Mucosa of descending colon (tissue), 3 donors: ENCODE measurements at regions of chr17 and their contacts with region 1.

Region 1: DNA sequence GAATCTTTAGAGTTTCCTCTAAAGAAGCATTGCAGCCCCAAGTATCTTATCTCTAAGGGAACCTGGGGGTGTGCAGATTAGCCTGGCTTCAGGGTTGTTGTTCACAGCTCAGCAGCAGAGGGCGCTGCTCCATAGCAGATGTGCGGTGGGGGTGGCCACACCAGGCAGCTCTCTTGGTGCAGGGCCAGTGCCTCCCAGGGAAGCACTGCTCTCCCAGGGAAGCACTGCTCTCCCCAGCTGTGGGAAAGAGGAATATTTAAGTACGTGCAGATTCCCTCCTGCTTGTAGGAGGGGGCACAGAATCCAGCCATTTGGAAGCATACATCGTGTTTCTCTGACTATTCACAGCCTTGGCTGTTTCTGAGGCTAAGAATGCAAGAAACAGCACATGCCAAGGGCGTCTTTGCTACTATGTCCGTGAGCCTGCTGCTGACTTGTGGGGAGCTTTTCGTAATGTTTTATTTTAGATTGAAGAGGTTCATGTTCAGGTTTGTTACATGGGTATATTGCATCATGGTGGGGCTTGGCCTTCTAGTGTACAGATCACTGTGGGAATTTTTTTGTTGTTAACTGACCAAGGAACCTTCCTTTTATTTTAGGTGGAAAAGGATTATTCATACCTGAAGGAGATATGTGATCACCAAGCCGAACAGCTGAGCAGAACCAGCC is 217.8 kb downstream of the SPECC1 start:
- DNase-seq: peak; percentile 66 to 88 (median 87)
- ATAC-seq: peak; percentile 98
- H3K4me3 ChIP-seq: no peak overlapping the region
- H3K4me1 ChIP-seq: no peaks in the 10 kb centered on the region
- CTCF ChIP-seq: peak; percentile 64

Region 2: GRCh38 chr17:20153231-20153630 is 73.7 kb before region 1 on chr17:
- intact Hi-C with region 1: no loop called
- DNase-seq: peak in 1 of 3 donors; percentile 34
- ATAC-seq: peak; percentile 34
- H3K4me3 ChIP-seq: no peak overlapping the region
- H3K4me1 ChIP-seq: peaks cover 9% of the 10 kb centered on the region
- CTCF ChIP-seq: no peak

Region 3: GRCh38 chr17:20291853-20292252 is 64.9 kb after region 1 on chr17:
- intact Hi-C with region 1: no loop called
- DNase-seq: no peak
- ATAC-seq: no peak
- H3K4me3 ChIP-seq: no peak overlapping the region
- H3K4me1 ChIP-seq: no peaks in the 10 kb centered on the region
- CTCF ChIP-seq: no peak

Region 4: GRCh38 chr17:20315821-20316220 is 88.9 kb after region 1 on chr17:
- intact Hi-C with region 1: loop called in 1 of 2 experiments (anchors 5 kb)
- DNase-seq: no peak
- ATAC-seq: no peak
- H3K4me3 ChIP-seq: no peak overlapping the region
- H3K4me1 ChIP-seq: no peaks in the 10 kb centered on the region
- CTCF ChIP-seq: no peak

Region 5: GRCh38 chr17:20562587-20562986 is 335.6 kb after region 1 on chr17:
- intact Hi-C with region 1: no loop called
- DNase-seq: no peak
- ATAC-seq: no peak
- H3K4me3 ChIP-seq: no peak overlapping the region
- H3K4me1 ChIP-seq: no peaks in the 10 kb centered on the region
- CTCF ChIP-seq: no peak